Head of caudate nucleus (tissue), 42 donors: ENCODE measurements at regions of chr17 and their contacts with region 1.

Region 1: GRCh38 chr17:20121359-20122253 is 112.4 kb downstream of the SPECC1 start:
- DNase-seq: peak; percentile 59 to 95 (median 86)

Region 2: DNA sequence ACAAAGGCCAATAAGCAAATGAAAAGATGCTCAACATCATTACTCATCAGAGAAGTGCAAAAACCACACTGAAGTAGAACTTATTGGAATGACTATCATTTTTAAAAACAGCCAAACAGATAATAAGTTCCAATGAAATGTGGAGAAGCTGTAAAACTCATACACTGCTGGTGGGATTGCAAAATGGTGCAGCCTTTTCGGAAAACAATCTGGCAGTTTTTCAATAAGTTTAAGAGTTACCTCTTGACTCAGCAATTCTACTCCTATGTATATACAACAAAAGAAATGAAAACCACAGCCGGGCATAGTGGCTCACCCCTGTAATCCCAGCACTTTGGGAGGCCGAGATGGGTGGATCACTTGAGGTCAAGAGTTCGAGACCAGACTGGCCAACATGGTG is 193.3 kb before region 1 on chr17:
- intact Hi-C with region 1: no loop called
- DNase-seq: no peak

Region 3: DNA sequence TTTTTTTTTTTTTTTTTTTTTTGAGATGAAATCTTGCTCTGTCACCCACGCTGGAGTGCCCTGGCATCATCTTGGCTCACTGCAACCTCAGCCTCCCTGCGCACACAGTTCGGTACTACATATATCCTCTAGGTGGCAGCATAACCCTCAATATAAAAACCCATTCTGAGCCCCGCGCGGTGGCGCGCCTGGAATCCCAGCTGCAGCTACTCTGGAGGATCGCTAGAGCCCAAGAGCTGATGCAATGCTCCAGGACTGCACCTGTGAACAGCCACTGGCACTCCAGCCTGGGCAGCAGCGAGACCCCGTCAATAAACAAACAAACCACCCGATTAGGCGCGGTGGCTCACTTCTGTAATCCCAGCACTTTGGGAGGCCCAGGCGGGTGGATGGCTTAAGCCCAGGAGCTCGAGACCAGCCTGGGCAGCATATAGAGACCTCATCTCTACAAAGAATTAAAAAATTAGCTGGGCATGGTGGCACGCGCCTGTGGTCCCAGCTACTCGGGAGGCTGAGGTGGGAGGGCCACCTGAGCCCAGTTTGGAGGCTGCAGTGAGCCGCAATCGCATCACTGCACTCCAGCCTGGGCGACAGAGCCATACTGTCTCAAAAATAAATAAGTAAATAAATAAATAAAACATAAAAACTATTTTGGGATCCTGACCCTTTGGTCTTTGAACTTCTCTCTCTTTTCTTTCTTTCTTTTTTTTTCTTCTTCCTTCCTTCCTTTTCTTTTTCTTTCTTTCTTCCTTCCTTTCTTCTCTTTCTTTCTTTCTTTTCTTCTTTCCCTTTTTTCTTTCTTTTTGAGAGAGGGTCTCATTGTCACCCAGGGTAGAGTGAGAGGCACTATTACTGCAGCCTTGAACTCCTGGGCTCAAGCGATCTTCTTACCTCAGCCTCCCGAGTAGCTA is 128.5 kb before region 1 on chr17:
- intact Hi-C with region 1: loop called (anchors 5 kb)
- DNase-seq: peak; percentile 85 to 96 (median 91)

Region 4: DNA sequence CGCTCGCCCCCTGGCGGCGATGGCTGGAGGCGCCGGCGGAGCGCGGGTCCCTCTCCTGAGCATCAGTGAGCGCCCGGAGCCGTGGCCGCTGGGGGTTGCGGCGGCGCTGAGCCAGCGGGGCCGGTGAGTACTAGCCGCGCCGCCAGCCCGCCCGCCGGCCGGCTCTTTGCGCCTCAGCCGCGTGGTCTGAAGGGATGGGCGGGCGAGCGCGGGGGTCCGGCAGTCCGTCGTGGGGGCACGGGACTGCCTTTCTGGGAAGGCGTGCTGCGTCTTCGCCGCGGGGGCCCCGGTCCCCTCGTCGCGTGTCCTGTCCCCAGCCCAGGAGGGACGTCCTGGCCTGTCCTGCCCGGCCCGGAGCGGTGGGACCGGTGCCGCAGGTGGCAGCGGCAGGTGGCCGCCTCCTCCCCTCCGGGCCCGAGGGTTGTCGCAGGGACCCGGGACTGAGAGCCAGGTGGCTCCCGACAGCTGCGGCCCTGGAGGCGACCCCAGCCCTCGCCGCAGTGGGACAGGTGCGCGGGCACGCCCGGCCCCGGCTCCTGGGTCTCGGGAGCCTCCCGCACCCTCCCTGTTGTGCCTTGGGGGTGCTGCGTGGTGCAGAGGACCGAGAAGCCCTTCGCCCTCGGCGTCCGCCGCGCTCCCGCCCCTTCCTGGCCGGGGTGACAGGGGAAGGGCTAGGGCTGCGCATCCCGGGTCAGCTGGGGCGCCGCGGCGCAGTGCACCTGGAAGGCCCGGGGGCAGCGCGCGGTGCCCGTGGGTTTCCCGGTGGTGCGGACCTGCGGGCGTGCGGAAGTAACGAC is 112.1 kb before region 1 on chr17 and contains the start of gene SPECC1:
- intact Hi-C with region 1: loop called (anchors 5 kb)
- DNase-seq: peak; percentile 30 to 94 (median 86)

Region 5: DNA sequence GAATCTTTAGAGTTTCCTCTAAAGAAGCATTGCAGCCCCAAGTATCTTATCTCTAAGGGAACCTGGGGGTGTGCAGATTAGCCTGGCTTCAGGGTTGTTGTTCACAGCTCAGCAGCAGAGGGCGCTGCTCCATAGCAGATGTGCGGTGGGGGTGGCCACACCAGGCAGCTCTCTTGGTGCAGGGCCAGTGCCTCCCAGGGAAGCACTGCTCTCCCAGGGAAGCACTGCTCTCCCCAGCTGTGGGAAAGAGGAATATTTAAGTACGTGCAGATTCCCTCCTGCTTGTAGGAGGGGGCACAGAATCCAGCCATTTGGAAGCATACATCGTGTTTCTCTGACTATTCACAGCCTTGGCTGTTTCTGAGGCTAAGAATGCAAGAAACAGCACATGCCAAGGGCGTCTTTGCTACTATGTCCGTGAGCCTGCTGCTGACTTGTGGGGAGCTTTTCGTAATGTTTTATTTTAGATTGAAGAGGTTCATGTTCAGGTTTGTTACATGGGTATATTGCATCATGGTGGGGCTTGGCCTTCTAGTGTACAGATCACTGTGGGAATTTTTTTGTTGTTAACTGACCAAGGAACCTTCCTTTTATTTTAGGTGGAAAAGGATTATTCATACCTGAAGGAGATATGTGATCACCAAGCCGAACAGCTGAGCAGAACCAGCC is 105.3 kb after region 1 on chr17:
- intact Hi-C with region 1: loop called (anchors 1 kb)
- DNase-seq: peak; percentile 84 to 97 (median 92)

Region 6: GRCh38 chr17:20315821-20316220 is 194.2 kb after region 1 on chr17:
- intact Hi-C with region 1: loop called (anchors 5 kb)
- DNase-seq: no peak